AG04449 (cell line): ENCODE measurements at regions of chr12 and their contacts with region 1.

Region 1: DNA sequence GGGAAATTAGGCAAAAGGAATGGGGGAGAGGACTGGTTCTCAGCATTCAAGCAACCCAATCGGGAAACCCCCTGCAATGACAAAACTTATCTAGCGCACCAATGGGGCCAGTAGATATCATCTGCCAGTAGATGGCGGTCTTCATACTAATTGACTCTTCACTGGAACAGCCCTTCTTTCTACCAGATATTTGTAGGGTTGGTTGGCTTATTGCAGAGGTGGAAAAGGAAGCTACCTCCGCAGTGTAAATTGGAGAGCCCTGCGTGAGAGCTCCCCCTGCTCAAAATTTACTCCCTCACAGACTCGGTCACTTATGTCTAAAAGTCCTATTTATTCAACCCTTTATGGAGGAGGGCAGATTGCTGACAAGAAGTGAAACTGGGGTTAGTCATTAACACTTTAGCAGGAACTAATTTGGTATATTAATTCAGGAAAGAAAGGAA is 166.1 kb upstream of the CCND2 start:
- DNase-seq: no peak
- H3K4me3 ChIP-seq: no peak overlapping the region
- CTCF ChIP-seq: peak; percentile 67

Region 2: DNA sequence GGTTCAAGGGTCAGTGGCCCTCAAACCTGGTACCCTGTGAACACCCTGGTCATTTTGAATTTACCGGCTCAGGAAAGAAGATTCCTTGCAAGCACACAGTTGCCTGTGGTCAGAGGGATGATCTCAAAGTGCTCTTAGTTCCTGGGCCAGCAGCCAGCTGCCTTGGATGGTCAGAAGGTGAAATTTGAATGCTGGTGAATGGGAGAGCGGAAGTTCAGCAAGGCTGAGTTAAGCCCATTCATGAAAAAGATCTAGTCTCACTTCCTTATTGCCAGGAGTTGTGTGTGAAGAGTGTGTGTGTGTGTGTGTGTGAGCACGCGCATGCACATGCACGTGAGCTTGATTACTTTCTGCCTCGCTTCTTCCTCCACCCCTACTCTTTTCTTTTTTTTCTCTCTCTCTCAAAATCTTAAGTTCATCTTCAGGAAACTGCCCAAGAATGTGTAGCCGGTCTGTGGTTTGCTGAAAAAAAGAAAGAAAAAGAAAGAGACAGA is 10.6 kb after region 1 on chr12:
- CTCF ChIA-PET with region 1: interaction called, 14 read pairs
- POLR2A ChIA-PET with region 1: no interaction called
- DNase-seq: no peak
- H3K4me3 ChIP-seq: no peak overlapping the region
- CTCF ChIP-seq: no peak

Region 3: GRCh38 chr12:4137015-4137414 is 29.6 kb after region 1 on chr12:
- CTCF ChIA-PET with region 1: no interaction called
- POLR2A ChIA-PET with region 1: no interaction called
- DNase-seq: no peak
- H3K4me3 ChIP-seq: no peak overlapping the region
- CTCF ChIP-seq: no peak

Region 4: GRCh38 chr12:4269279-4269991 is 162.0 kb after region 1 on chr12:
- CTCF ChIA-PET with region 1: interaction called, 10 read pairs
- POLR2A ChIA-PET with region 1: no interaction called
- DNase-seq: no peak
- H3K4me3 ChIP-seq: peak overlapping the region; percentile 15; the same call in 1 of the 2 replicates
- CTCF ChIP-seq: no peak